ENCODE measurements at regions of chrX and their contacts with region 1.

Region 1: GRCh38 chrX:36534900-36535299 is 473.3 kb upstream of the FAM47C start:
- DNase-seq: no peak
- H3K4me3 ChIP-seq: no peak overlapping the region
- H3K27ac ChIP-seq: no peak overlapping the region
- H3K4me1 ChIP-seq: no peaks in the 10 kb centered on the region
- H3K27me3 ChIP-seq: no peaks in the 10 kb centered on the region
- CTCF ChIP-seq: no peak
- EP300 ChIP-seq: no peak
- POLR2A ChIP-seq: no peak

Region 2: GRCh38 chrX:36640047-36640631 is 105.2 kb after region 1 on chrX:
- in situ Hi-C with region 1: loop called in 1 of 4 experiments (anchors 25 kb)
- intact Hi-C with region 1: no loop called
- DNase-seq: no peak
- H3K4me3 ChIP-seq: no peak overlapping the region
- H3K27ac ChIP-seq: no peak overlapping the region
- H3K4me1 ChIP-seq: no peaks in the 10 kb centered on the region
- H3K27me3 ChIP-seq: no peaks in the 10 kb centered on the region
- CTCF ChIP-seq: no peak
- EP300 ChIP-seq: no peak
- POLR2A ChIP-seq: no peak